Activated CD4-positive, alpha-beta memory T cell treated with anti-CD3 and anti-CD28 coated beads for 36 hours (primary cell): ENCODE measurements at regions of chr3 and their contacts with region 1.

Region 1: DNA sequence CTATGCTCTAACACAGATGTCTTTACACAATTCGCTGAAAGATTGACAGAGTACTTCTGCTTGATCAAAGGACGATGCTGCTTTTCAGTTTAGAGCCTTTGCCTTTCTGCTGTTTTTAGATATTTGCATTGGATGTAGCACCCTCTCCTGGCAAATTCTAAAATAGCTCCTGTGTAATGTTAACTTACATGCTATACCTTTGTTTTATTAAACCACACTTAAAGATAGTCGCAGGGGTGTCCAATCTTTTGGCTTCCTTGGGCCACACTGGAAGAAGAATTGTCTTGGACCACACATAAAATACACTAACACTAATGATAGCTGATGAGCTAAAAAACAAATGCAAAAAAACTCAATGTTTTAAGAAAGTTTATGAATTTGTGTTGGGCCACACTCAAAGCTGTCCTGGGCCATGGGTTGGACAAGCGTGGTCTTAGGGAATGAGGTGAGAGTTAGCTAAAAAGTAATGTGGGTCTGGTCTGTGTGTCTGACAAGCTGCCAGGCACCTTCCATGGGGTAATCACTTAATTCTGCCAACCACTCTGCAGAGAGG is 62.9 kb downstream of the ATG7 start:
- DNase-seq: no peak
- H3K4me3 Mint-ChIP-seq: no peak overlapping the region
- H3K27ac Mint-ChIP-seq: no peak overlapping the region
- H3K4me1 Mint-ChIP-seq: peaks cover 11% of the 10 kb centered on the region
- H3K27me3 Mint-ChIP-seq: no peaks in the 10 kb centered on the region

Region 2: DNA sequence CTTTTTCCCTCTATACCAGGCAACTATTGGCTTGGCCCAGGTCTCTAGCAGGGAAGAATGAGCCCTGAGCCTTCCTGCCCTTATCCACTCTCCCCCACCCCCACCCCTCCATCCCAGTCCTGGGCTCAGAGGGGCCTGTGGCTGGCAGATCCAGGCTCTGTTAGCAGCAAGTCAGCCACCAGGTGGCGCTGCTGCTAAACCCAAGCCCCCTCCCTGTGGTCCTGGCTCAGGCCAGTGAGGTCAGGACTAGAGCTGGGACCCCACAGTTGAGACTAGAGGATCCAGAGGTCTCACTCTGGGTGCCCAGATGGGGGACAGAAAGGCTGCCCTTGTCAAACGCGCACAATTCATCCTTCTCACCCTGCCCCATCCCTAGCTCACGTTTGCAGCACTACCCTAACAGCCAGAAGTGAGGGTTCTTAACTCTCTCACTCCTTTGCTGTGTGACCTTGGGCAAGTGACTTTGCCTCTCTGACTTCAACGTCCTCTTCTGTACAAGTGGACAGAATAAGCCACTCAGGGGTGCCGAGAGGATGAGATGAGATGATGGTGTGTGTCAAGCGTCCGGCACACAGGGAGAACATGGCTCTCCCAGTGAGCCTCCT is 389.3 kb before region 1 on chr3:
- CTCF ChIA-PET with region 1: no interaction called
- POLR2A ChIA-PET with region 1: no interaction called
- intact Hi-C with region 1: loop called (anchors 10 kb)
- DNase-seq: peak; percentile 65
- H3K4me3 Mint-ChIP-seq: no peak overlapping the region
- H3K27ac Mint-ChIP-seq: no peak overlapping the region
- H3K4me1 Mint-ChIP-seq: no peaks in the 10 kb centered on the region
- H3K27me3 Mint-ChIP-seq: peaks cover 12% of the 10 kb centered on the region

Region 3: DNA sequence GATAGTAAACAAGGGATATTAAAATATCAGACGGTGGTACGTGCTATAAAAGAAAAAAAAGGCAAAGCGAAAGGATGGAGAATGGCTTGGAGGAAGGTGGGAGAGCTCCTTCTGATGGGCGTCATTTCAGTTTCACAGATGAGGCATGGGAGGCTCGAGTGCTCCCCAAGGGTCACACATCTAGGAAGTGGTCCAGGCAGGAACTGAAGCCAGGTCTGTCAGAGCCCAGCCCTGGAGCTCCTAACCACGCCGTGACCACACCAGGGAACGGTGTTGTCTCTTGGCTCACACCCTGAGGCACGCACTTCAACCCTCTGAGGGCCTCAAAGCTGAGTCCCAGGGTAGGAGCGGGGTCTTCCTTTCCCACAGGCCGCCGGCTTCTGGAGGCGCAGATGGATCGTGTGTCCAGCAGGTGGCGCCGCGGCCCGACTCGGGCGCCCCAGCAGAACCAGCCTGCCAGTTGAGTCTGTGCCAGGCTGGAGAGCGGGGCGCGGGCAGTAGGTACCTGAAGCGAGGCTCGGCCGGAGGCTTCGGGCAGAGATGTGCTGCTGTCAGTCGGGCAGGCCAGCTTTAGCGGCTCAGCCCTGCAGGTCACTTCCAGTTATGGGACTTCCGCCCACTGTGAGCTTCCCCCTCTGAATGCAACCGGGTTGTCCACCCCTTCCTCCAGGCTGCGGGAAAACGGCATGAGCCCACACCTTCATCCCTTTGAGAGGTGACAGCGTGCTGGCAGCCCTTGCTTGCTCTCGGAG is 274.5 kb before region 1 on chr3:
- CTCF ChIA-PET with region 1: interaction called, 47 read pairs
- POLR2A ChIA-PET with region 1: no interaction called
- intact Hi-C with region 1: loop called (anchors 10 kb)
- DNase-seq: peak; percentile 61
- H3K4me3 Mint-ChIP-seq: no peak overlapping the region
- H3K27ac Mint-ChIP-seq: no peak overlapping the region
- H3K4me1 Mint-ChIP-seq: no peaks in the 10 kb centered on the region
- H3K27me3 Mint-ChIP-seq: peaks cover 6% of the 10 kb centered on the region

Region 4: GRCh38 chr3:11155341-11156025 is 179.6 kb before region 1 on chr3:
- CTCF ChIA-PET with region 1: interaction called, 33 read pairs
- POLR2A ChIA-PET with region 1: no interaction called
- intact Hi-C with region 1: no loop called
- DNase-seq: peak; percentile 41
- H3K4me3 Mint-ChIP-seq: no peak overlapping the region
- H3K27ac Mint-ChIP-seq: no peak overlapping the region
- H3K4me1 Mint-ChIP-seq: peaks cover 9% of the 10 kb centered on the region
- H3K27me3 Mint-ChIP-seq: peaks cover 53% of the 10 kb centered on the region

Region 5: GRCh38 chr3:11323813-11324212 is 11.3 kb before region 1 on chr3:
- CTCF ChIA-PET with region 1: interaction called, 13 read pairs
- POLR2A ChIA-PET with region 1: no interaction called
- intact Hi-C with region 1: no loop called
- DNase-seq: no peak
- H3K4me3 Mint-ChIP-seq: no peak overlapping the region
- H3K27ac Mint-ChIP-seq: no peak overlapping the region
- H3K4me1 Mint-ChIP-seq: peaks cover 6% of the 10 kb centered on the region
- H3K27me3 Mint-ChIP-seq: no peaks in the 10 kb centered on the region

Region 6: GRCh38 chr3:11350374-11350773 is 15.2 kb after region 1 on chr3:
- CTCF ChIA-PET with region 1: interaction called, 10 read pairs
- POLR2A ChIA-PET with region 1: no interaction called
- intact Hi-C with region 1: no loop called
- DNase-seq: no peak
- H3K4me3 Mint-ChIP-seq: no peak overlapping the region
- H3K27ac Mint-ChIP-seq: no peak overlapping the region
- H3K4me1 Mint-ChIP-seq: no peaks in the 10 kb centered on the region
- H3K27me3 Mint-ChIP-seq: no peaks in the 10 kb centered on the region

Region 7: DNA sequence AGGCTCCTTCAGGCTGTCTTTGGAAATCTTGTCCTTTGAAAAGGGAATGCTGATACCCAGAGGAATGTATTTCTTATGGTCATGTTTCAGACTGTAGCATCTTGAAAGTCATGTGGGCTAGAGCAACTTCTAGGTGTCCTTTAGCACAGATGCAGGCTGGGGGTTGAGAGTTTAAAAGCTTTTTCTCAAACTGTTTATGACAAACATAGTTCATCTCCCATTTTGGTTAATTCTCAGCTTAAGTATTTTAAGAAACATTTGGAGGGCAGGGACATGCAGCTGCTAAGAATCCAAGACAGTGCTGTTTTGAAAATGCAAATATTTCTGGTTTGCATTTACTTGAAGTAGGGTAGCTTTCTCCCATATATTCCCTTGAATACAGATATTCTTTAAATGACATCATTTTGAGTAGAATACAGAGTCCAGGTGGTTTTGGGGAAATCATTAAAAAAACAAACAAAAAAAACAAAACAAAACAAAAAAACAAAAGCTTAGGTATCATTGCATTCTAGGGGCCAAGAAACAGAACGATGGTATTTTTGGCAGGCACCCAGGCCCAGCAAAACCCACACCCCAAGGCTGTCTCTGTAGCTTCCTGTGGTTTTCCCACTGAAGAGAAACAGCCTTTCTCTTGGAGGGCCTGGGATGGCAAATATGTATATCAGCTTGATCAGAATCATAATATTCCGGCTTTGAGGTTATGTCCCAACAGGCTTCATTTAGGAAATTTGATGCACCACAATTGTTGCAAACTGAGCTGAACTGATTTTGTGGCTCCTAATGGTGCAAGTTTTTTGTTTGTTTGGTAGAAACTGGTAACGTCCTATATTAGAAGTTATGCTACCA is 57.1 kb after region 1 on chr3:
- CTCF ChIA-PET with region 1: no interaction called
- POLR2A ChIA-PET with region 1: no interaction called
- intact Hi-C with region 1: no loop called
- DNase-seq: no peak
- H3K4me3 Mint-ChIP-seq: no peak overlapping the region
- H3K27ac Mint-ChIP-seq: no peak overlapping the region
- H3K4me1 Mint-ChIP-seq: peaks cover 30% of the 10 kb centered on the region
- H3K27me3 Mint-ChIP-seq: no peaks in the 10 kb centered on the region